ENCODE measurements at regions of chr1 and their contacts with region 1.

Region 1: GRCh38 chr1:171313835-171314320 is at the start of gene FMO4:
- DNase-seq: peak; percentile 94
- H3K4me3 ChIP-seq: peak within 1 kb of the TSS in 1 of 3 experiments; percentile 29
- H3K27ac ChIP-seq: no peak within 1 kb of the TSS
- H3K4me1 ChIP-seq: peaks cover 4% of the 10 kb centered on the region
- H3K27me3 ChIP-seq: no peaks in the 10 kb centered on the region
- CTCF ChIP-seq: peak; percentile 76 to 85
- POLR2A ChIP-seq: no peak
- total RNA-seq, gene FMO4: 0.16 and 0.33 TPM in 2 replicates

Region 2: DNA sequence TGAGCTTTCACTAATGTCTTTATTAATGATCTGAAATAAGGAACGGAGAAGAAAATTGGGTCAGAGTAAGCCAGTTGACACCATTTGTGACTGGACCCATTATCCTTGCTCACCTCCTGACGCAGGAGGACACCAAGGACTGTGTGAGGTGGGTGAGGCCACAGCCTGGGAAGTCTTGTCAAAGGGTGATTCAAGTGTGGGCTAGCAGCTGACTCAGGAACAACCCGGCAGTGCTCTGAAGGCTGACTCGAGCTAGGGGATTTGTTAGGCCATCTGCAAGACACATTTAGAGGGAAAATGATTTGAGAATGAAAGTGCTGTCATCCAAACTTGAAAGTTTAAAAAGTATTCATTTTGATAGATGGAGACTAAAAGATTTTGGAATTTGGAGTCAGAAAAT is 628.7 kb before region 1 on chr1:
- CTCF ChIA-PET with region 1: interaction called, 4 read pairs
- POLR2A ChIA-PET with region 1: no interaction called
- dilution Hi-C with region 1: no loop called
- intact Hi-C with region 1: loop called (anchors 5 kb)
- DNase-seq: no peak
- H3K4me3 ChIP-seq: no peak overlapping the region
- H3K27ac ChIP-seq: no peak overlapping the region
- H3K4me1 ChIP-seq: peaks cover 7% of the 10 kb centered on the region
- H3K27me3 ChIP-seq: no peaks in the 10 kb centered on the region
- CTCF ChIP-seq: no peak
- POLR2A ChIP-seq: no peak

Region 3: DNA sequence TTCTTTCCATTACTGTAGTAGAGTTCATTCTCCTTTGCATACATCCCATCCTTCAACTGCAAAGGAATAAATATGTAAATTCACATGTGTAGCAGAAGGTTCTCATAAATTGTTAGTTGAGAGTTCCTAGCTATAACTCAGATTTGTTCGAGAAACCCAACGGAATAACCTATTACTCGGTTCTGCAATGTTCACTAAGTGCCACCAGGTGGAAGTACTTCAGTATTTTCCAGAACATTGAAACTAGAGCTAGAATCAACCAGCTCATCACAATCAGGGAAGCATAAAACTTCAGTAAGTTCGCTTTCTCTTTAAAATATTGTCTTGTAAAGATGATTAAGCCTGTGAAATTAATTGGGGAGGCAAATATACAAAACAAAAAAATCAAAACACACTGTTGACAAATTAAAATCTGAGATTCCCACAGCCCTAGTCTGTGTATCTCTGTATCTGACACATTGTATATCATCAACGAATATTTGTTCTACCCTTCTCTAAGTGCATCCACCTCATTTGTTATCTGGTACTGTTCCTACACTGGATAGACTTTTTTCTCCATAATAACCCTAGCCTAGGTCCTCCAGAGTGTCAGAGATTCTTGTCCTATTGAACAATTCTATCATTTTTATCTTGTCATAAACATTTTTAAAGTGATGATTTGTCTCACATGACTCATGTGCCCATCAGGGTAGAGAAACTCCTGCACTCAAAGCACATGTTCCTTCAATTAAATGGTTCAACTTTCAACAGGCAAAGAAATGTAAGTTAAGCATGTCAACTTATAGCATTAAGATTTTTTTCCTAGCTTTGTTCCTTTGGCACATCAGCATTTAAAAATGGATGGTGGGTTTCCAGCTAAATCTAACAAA is 346.6 kb before region 1 on chr1:
- CTCF ChIA-PET with region 1: interaction called, 126 read pairs
- POLR2A ChIA-PET with region 1: no interaction called
- dilution Hi-C with region 1: no loop called
- intact Hi-C with region 1: loop called (anchors 2 kb)
- DNase-seq: peak; percentile 45
- H3K4me3 ChIP-seq: no peak overlapping the region
- H3K27ac ChIP-seq: no peak overlapping the region
- H3K4me1 ChIP-seq: no peaks in the 10 kb centered on the region
- H3K27me3 ChIP-seq: peaks cover 0 to 2% of the 10 kb centered on the region in 2 experiments
- CTCF ChIP-seq: peak in 1 of 2 donors; percentile 47
- POLR2A ChIP-seq: no peak

Region 4: DNA sequence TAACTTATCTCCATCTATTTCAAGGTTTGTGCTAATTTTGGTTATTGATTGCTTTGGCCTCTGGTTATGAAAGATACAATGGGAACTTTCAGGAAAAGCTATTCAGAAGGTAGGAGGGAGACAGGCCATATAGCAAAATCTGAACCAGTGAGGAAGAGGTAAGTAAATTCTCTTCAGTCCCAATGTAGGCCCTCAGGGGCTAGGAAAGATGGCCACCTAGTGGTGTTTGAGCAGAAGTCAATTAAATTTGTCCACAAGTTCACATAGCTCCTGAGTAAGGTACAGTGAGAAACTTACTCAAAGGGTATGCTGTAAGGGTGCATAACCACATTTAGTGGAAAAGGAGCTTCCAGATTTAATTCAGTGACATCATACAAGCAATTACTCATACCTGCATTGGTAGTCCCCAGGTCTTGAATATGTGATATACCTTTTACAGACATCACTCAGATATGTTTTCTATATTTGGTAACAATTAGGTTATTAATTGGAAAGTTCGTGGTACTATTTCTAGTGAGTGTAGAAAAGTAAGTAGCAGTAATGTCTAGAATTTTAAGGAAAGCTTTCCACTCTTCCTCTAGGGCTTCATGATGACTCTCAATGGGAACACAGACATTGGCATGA is 87.0 kb before region 1 on chr1:
- CTCF ChIA-PET with region 1: interaction called, 14 read pairs
- POLR2A ChIA-PET with region 1: no interaction called
- dilution Hi-C with region 1: no loop called
- intact Hi-C with region 1: no loop called
- DNase-seq: peak; percentile 57
- H3K4me3 ChIP-seq: no peak overlapping the region
- H3K27ac ChIP-seq: no peak overlapping the region
- H3K4me1 ChIP-seq: no peaks in the 10 kb centered on the region
- H3K27me3 ChIP-seq: no peaks in the 10 kb centered on the region
- CTCF ChIP-seq: peak; percentile 44 to 53
- POLR2A ChIP-seq: no peak

Region 5: DNA sequence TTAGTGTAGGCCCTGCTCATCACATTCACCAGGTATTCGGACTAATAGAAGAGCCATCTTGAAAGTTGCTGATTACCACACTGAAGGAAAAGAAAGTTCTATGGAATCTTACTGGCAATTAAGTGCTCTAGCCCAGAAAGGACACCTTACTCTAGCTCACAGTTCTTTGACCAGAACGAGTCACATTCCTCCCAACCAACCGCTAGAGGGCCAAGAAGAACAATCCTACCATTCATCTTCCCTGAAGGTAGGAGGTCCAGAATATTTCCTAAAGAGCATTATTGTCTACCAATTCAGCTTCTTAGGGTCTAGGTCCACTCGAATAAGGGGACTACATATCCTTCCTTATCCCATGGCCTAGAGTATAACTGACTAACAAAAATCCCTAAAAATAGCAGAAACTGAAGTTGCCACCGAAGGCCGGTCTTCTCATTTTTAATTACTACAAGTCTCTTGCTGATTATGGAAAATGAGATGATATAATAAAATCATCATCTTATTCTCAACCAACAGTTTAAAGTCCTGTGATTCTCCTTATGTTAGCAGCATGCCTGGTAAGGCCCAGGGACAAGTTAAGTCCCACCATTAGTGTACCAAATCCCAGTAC is 68.3 kb before region 1 on chr1:
- CTCF ChIA-PET with region 1: interaction called, 74 read pairs
- POLR2A ChIA-PET with region 1: no interaction called
- dilution Hi-C with region 1: no loop called
- intact Hi-C with region 1: loop called (anchors 1 kb)
- DNase-seq: peak; percentile 34
- H3K4me3 ChIP-seq: no peak overlapping the region
- H3K27ac ChIP-seq: no peak overlapping the region
- H3K4me1 ChIP-seq: no peaks in the 10 kb centered on the region
- H3K27me3 ChIP-seq: peaks cover 5 to 6% of the 10 kb centered on the region in 2 experiments
- CTCF ChIP-seq: peak; percentile 61 to 74
- POLR2A ChIP-seq: no peak

Region 6: DNA sequence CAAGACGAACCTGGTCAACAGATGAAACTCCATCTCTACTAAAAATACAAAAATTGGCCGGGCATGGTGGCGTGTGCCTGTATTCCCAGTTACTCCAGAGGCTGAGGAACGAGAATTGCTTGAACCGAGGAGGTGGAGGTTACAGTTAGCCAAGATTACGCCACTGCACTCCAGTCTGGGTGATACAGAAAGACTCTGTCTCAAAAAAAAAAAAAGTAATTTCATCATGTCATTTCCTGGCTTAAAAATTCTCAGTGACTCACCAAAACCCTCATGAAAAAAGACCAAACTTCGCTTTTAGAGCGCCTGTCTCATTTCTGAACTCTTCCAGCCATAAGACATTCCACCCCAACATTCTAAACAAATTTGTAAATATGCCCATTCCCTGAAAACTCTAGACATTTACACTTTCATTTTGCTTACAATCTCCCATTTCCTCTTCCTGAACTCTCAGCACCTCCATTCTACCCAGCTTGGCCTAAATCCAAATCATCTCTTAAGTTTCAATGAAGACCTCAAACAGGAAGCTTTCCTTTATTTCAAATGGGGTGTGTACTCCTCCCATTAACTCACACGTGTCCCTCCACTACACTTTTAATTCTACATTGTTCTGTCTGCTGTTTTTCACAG is 121.0 kb after region 1 on chr1:
- CTCF ChIA-PET with region 1: no interaction called
- POLR2A ChIA-PET with region 1: no interaction called
- dilution Hi-C with region 1: no loop called
- intact Hi-C with region 1: loop called (anchors 2 kb)
- DNase-seq: peak; percentile 84
- H3K4me3 ChIP-seq: peak overlapping the region in 1 of 3 experiments; percentile 47
- H3K27ac ChIP-seq: peak overlapping the region; percentile 91
- H3K4me1 ChIP-seq: peaks cover 13% of the 10 kb centered on the region
- H3K27me3 ChIP-seq: no peaks in the 10 kb centered on the region
- CTCF ChIP-seq: no peak
- POLR2A ChIP-seq: no peak

Region 7: DNA sequence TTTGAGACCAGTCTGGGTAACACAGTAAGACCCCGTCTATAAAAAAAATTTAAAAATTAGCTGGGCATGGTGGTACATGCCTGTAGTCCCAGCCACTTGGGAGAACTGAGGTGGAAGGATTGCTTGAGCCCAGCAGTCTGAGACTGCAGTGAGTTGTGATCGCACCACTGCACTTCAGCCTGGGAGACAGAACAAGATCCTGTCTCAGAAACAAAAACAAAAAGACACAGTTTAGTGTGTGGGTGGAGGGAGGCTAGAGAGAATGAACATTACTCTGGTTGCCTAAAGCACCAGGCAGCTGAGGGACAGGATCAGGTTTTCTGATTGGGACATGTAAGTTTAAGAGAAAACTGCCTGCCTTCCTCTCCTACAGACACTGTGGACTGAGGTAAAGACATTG is 385.7 kb after region 1 on chr1:
- CTCF ChIA-PET with region 1: no interaction called
- POLR2A ChIA-PET with region 1: no interaction called
- dilution Hi-C with region 1: no loop called
- intact Hi-C with region 1: no loop called
- DNase-seq: no peak
- H3K4me3 ChIP-seq: no peak overlapping the region
- H3K27ac ChIP-seq: no peak overlapping the region
- H3K4me1 ChIP-seq: no peaks in the 10 kb centered on the region
- H3K27me3 ChIP-seq: no peaks in the 10 kb centered on the region
- CTCF ChIP-seq: no peak
- POLR2A ChIP-seq: no peak